Naive thymus-derived CD8-positive, alpha-beta T cell (primary cell): ENCODE measurements at regions of chr19 and their contacts with region 1.

Region 1: DNA sequence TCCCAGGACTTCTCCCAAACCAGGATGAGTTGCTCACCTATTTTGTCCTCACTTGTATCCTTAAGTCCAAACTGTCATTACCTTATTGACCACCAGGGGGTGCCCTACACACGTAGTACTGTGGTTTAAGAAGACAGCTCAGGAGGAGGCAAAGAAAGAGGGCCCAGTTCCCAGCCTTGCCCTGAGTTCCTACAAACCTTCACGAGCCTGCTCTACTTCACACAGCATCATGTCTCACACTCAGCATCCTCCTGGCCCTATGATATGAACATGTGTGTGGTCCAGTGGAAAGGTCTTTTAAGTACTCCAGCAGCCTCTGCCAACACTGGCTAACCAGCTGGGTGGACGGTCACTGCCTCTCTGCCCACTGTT is 8.1 kb upstream of the ZNF784 start:
- DNase-seq: peak; percentile 66 to 97 (median 89)
- ATAC-seq: peak; percentile 36 to 41
- H3K4me3 Mint-ChIP-seq: peak overlapping the region in 8 of 10 donors; percentile 7 to 83 (median 34)
- H3K27ac Mint-ChIP-seq: peak overlapping the region; percentile 6 to 93 (median 87)
- H3K4me1 Mint-ChIP-seq: peaks cover 34 to 52% (median 46%) of the 10 kb centered on the region in 4 donors
- H3K27me3 Mint-ChIP-seq: no peaks in the 10 kb centered on the region

Region 2: DNA sequence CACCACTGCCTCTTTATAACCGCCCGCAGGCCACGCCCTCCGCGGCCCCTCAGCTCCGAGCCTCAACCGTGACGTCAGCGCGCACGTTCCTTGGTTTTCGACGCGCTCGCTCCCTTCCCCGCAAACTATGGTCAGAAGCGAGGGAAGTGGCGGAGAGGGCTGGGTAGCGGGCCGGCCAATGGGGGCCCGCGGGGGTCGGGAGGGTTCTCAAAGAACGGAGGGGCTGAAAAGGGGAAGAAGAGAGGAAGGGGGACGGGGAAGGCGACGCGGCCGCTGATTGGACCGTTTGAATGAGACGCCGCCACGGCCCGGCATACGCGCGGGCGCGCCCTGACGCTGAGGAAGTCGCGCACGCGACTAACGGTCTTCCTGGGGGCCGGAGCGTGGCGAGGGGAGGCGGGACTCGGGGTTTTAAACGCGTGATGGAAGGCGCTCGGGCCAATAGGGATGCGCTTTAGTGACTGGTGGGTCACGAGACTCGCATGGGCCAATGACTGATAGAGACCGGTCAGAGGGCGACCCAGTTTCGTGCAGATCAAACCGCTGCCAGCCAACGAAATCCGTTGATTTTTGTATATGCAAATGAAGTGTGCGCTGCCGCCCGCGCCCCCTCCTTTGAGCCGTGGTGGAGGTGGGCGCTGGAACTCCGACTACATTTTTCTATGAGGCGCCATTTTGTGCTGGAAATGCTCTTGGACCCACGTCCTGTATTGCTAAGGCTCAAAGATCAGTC is 224.5 kb before region 1 on chr19:
- POLR2A ChIA-PET with region 1: interaction called, 10 read pairs
- DNase-seq: peak; percentile 94 to 99 (median 97)
- ATAC-seq: peak; percentile 91 to 92
- H3K4me3 Mint-ChIP-seq: peak overlapping the region; percentile 88 to 98 (median 94)
- H3K27ac Mint-ChIP-seq: peak overlapping the region; percentile 93 to 100 (median 99)
- H3K4me1 Mint-ChIP-seq: peaks cover 20 to 39% (median 30%) of the 10 kb centered on the region in 4 donors
- H3K27me3 Mint-ChIP-seq: peaks cover 0 to 3% (median 0%) of the 10 kb centered on the region in 5 donors

Region 3: GRCh38 chr19:55580628-55581144 is 51.8 kb before region 1 on chr19 and contains the start of gene ZNF579:
- POLR2A ChIA-PET with region 1: interaction called, 12 read pairs
- DNase-seq: peak; percentile 45 to 85 (median 69)
- ATAC-seq: peak; percentile 65 to 74
- H3K4me3 Mint-ChIP-seq: peak within 1 kb of the TSS; percentile 82 to 95 (median 87)
- H3K27ac Mint-ChIP-seq: peak within 1 kb of the TSS; percentile 88 to 96 (median 92)
- H3K4me1 Mint-ChIP-seq: peaks cover 18 to 31% (median 30%) of the 10 kb centered on the region in 4 donors
- H3K27me3 Mint-ChIP-seq: no peaks in the 10 kb centered on the region
- polyA plus RNA-seq, gene ZNF579: 0.16 to 0.39 (median 0.20) TPM

Region 4: DNA sequence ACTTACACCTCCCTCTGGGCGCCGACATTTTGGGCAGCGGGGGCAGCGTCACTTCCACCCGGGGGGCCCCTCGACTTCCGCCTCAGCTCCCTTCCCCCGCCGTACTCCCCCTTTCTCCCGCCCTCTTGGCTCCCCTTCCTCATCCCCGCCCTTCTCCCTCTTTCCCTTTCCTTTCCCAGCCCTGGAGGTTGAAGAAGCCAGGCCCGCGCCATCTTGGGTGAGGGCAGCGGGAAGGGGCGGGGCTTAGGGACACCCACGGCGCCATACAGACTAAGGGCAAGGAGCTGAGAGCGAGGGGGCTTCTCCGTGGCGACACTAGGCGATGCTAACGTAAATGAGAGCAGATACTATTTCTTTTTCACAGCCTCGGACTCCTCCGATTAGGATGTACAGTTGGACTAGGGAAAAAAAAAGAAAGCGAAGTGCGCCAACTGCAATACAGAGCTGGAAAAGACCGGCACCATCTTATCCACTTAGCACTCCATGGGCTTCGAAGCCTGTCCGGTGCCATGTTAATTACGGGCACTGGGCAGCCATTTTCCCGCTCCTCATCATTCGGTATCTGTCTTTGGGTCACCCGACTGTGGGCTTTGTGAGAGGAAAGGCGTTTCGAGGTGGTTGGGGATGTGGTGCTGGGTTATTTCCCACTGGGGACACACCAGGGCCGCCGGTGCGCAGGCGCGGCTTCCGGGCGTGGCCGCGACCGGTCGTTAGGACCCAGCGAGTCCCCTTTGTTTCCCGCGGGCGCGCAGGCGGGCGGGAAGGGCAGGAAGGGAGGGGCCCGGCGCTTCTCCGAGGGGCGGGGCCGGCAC is 32.8 kb before region 1 on chr19 and contains the start of gene FIZ1:
- POLR2A ChIA-PET with region 1: interaction called, 60 read pairs
- DNase-seq: peak; percentile 89 to 99 (median 96)
- ATAC-seq: peak; percentile 76 to 78
- H3K4me3 Mint-ChIP-seq: peak within 1 kb of the TSS; percentile 89 to 100 (median 99)
- H3K27ac Mint-ChIP-seq: peak within 1 kb of the TSS; percentile 96 to 100 (median 99)
- H3K4me1 Mint-ChIP-seq: peaks cover 16 to 39% (median 28%) of the 10 kb centered on the region in 4 donors
- H3K27me3 Mint-ChIP-seq: no peaks in the 10 kb centered on the region
- polyA plus RNA-seq, gene FIZ1: 2.8 to 5.4 (median 3.4) TPM

Region 5: DNA sequence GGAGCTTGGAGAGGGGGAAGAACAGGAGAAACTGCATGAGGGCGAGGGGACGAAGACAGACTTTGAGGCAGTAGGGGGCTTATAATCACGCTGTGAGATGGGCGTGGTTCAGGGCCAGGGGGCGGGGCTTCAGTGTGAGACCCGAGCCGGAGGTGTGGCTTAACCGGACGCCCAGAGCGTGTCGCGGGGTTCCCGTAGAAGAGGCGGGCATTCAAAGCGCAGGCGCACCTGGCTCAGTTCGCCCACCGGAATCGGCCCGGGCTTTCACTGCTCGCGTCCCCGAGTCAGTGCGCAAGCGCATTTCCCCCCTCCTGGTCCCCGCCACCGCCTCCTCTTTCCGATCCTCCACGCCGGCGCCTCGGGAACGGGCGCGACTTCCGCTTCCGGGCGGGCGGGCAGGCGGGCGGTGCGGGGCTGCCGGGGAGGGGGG is 27.2 kb before region 1 on chr19:
- POLR2A ChIA-PET with region 1: interaction called, 60 read pairs
- DNase-seq: peak; percentile 95 to 99 (median 97)
- ATAC-seq: peak; percentile 77 to 79
- H3K4me3 Mint-ChIP-seq: peak overlapping the region; percentile 78 to 93 (median 89)
- H3K27ac Mint-ChIP-seq: peak overlapping the region; percentile 78 to 98 (median 94)
- H3K4me1 Mint-ChIP-seq: peaks cover 37 to 64% (median 61%) of the 10 kb centered on the region in 4 donors
- H3K27me3 Mint-ChIP-seq: no peaks in the 10 kb centered on the region

Region 6: DNA sequence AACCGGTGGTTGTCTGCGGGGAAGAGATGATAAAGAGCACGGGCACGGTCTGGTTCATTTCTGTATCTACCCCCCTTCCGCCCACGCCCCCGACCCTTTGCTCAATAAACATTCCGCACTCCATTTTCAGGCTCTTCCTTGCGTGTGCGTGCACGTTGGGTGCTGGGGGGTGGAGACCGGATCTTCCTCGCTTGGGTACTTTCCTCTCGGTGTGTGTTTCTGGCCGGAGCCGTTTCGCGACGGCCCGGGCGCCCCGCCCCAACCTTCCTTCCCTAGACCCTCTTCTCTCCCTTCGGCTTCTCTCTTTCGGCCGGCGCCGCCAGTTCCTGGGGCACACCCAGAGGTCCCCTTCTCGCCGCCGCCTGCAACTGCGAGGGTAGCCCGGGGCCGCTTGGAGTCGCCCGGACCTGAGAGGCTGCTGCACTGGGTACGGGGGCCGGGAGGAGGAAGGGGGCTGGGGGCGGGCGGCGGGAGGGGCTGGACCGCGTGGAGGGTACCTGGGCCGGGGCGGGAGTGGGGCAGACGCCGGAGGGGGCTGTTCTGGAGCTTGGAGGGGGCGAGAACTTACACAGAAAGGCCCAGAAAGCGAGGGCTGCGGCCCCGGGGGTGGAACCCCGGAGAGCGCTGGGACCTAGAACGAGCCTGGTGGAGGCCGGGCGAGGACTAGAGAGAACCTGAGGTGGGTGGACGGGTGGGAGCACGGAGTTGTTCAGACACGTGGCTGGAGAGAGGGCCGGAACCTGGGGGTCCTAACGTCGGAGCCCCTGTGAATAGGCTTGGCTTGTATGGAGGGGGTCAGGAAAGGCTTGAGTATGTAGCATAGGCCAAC is 11.1 kb after region 1 on chr19 and contains the start of gene ZNF581:
- POLR2A ChIA-PET with region 1: interaction called, 148 read pairs
- DNase-seq: peak; percentile 67 to 86 (median 76)
- ATAC-seq: peak; percentile 45 to 51
- H3K4me3 Mint-ChIP-seq: peak within 1 kb of the TSS; percentile 91 to 99 (median 94)
- H3K27ac Mint-ChIP-seq: peak within 1 kb of the TSS; percentile 94 to 99 (median 98)
- H3K4me1 Mint-ChIP-seq: peaks cover 30 to 64% (median 60%) of the 10 kb centered on the region in 4 donors
- H3K27me3 Mint-ChIP-seq: no peaks in the 10 kb centered on the region
- polyA plus RNA-seq, gene ZNF581: 21.2 to 35.9 (median 34.9) TPM

Region 7: DNA sequence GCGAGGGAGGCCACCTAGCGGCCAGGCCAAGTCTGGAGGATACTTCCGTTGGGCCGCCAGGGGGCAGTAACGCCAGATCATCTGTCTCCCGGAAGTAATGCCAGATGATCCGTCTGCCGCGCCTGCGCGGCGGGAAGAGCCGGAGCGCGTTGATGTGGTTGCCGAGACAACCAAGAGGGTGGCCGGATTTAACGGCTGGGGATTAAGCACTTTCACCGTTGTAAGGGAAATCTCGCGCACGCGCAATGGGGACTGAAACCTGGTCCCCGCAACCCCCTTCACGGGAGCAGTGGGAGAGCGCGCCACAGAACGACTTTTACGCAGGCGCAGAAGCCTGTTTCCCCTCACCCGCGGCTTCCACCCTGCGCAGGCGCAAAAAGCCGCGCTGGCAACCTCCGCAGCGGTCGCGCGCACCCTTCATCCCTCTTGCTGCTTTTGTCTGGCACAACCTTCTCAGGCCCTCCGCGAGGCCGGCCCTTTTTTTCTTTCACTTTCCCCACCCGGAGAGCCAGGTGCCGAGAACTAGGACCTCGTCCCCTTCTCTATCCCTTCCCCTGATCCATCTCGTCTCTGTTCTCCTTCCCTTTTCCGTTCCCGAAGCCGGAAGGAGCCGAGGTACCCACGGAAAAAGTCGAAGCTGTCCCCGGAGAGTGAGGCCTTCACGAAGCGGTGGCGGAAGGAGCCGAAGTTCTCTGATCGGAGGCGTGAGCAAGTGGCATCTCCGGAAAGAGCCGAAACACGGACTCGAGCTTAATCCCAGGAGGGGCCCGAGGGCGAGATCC is 21.5 kb after region 1 on chr19:
- POLR2A ChIA-PET with region 1: interaction called, 148 read pairs
- DNase-seq: peak; percentile 99 to 100 (median 100)
- ATAC-seq: peak; percentile 80 to 81
- H3K4me3 Mint-ChIP-seq: peak overlapping the region; percentile 88 to 99 (median 97)
- H3K27ac Mint-ChIP-seq: peak overlapping the region; percentile 97 to 100 (median 99)
- H3K4me1 Mint-ChIP-seq: peaks cover 25 to 56% (median 54%) of the 10 kb centered on the region in 4 donors
- H3K27me3 Mint-ChIP-seq: no peaks in the 10 kb centered on the region

Region 8: DNA sequence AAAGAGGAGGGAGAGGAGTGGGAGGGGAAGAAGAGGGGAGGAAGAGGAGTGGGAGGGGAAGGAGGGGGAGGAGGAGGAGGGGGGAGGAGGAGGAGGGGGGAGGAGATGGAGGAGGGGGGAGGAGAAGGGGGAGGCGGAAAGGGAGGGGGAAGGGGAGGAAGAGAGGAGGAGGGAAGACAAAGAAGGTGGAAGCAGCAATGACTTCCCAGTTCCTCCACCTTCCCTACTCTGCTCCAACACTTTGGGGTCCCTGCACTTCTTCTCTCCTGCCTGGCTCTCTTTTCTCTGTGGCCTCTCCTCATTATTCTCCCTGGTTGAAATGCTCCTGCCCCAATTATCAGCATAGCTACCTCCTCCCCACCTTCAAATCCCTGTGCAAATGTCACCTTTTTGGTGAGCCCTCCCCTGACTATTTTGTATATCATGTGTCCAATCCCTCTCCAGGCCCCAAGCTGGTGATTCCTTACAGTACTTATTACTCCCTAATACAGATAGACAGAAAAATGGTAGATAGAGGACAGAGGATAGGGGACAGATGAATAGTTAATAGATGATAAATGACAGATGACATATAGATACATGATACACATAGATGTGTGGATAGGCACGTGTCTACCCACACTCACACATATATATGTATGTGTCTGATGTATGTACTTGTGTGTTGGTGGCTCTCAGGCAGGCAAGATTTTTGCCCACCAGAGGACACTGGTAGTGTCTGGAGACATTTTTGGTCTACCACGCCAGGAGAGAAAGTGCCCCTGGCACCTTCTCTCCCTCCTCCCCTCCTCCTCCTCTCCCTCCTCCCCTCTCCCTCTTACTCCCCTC is 80.6 kb after region 1 on chr19:
- POLR2A ChIA-PET with region 1: no interaction called
- DNase-seq: no peak
- ATAC-seq: no peak
- H3K4me3 Mint-ChIP-seq: no peak overlapping the region
- H3K27ac Mint-ChIP-seq: peak overlapping the region in 4 of 10 donors; percentile 31 to 58 (median 50)
- H3K4me1 Mint-ChIP-seq: peaks cover 3 to 12% (median 7%) of the 10 kb centered on the region in 4 donors
- H3K27me3 Mint-ChIP-seq: peaks cover 8 to 22% (median 17%) of the 10 kb centered on the region in 5 donors